ENCODE measurements at regions of chr2 and their contacts with region 1.

Region 1: DNA sequence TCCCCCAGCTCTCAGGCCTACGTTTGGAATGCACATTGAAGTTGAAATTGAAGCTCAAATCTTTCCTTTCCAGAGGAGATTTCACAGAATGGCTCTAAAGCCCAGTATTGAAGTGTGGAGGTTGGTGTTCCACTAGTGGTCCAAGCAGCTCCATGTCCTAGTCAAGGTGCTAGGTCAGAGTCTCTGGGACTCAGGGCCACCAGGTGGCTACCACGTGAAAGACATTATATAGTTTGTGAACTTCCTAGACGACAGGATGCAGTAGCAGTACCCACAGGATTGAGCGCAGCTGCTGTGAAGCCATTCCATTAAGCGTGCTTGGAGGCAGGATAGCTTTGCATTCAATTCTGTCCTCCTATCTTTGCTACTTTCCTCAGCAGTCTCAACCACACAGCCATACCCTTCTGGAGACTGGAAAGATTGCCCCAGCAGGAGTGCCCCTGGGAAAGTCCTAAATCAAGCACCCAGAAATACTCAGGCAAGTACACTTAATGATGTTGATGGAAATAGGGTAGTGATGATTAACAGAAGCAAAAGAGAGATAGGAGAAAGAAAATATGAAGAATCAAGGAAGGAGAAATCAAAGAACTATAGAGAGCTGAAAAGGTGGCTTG is 4.7 kb upstream of the TGFA start:
- DNase-seq: no peak
- ATAC-seq: no peak
- H3K4me3 ChIP-seq: no peak overlapping the region
- H3K4me3 Mint-ChIP-seq: no peak overlapping the region
- H3K27ac ChIP-seq: no peak overlapping the region
- H3K27ac Mint-ChIP-seq: no peak overlapping the region
- H3K4me1 ChIP-seq: peaks cover 9 to 17% of the 10 kb centered on the region in 2 experiments
- H3K4me1 Mint-ChIP-seq: peaks cover 9 to 13% (median 12%) of the 10 kb centered on the region in 3 donors
- H3K27me3 ChIP-seq: peaks cover 0 to 38% of the 10 kb centered on the region in 2 experiments
- H3K27me3 Mint-ChIP-seq: peaks cover 17 to 32% of the 10 kb centered on the region in 2 donors

Region 2: DNA sequence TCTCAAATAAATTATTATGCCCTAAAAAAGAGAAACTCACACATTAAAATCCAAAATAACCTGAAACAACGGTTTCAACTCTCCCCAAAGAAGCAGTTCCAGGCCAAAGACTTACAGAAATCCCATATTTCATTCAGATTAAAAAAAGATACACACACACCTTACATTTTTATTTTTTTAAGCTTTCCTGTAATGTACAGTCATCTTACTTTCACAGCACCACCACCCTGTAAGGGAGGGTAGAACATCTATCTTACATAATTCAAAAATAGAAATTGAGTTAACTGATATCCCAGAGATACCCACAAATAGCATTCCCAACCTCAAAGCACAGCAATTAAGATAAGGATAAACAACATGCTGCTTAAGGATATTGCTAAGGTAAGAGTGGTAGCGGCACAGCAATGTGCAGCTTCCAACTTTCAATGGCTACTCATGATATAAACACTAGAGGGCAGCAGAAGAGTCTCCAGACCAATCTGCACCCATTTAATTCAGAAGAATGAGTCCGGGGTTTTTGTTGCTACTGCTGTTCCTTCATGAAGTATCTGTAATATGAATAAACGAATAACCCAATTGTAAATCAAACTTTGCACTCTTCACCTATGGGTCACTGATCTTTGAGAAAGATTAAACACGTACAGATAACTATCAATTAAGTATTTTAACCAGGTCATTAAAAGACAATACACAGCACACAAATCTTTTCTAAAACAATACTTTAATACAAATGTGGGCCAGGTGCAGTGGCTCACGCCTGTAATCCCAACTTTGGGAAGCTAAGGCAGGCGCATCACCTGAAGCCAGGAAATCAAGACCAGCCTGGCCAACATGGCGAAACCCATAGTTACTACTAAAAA is 1182.6 kb before region 1 on chr2:
- CTCF ChIA-PET with region 1: no interaction called
- POLR2A ChIA-PET with region 1: interaction called in 1 of 2 experiments, 15 read pairs
- DNase-seq: peak in 1 of 35 experiments; percentile 54
- ATAC-seq: peak in 3 of 4 experiments; percentile 47 to 62 (median 52)
- H3K4me3 ChIP-seq: no peak overlapping the region
- H3K4me3 Mint-ChIP-seq: no peak overlapping the region
- H3K27ac ChIP-seq: no peak overlapping the region
- H3K27ac Mint-ChIP-seq: no peak overlapping the region
- H3K4me1 ChIP-seq: no peaks in the 10 kb centered on the region
- H3K4me1 Mint-ChIP-seq: peaks cover 22 to 29% (median 25%) of the 10 kb centered on the region in 3 donors
- H3K27me3 ChIP-seq: no peaks in the 10 kb centered on the region
- H3K27me3 Mint-ChIP-seq: no peaks in the 10 kb centered on the region

Measured in T-cell (primary cell).